ENCODE measurements at regions of chr19 and their contacts with region 1.

Region 1: GRCh38 chr19:12333162-12334159 is at the start of gene ZNF563:
- DNase-seq: peak; percentile 100
- ATAC-seq: peak; percentile 91
- H3K4me3 Mint-ChIP-seq: peak within 1 kb of the TSS; percentile 88
- H3K27ac Mint-ChIP-seq: peak within 1 kb of the TSS; percentile 97
- H3K4me1 Mint-ChIP-seq: peaks cover 34% of the 10 kb centered on the region
- H3K27me3 Mint-ChIP-seq: no peaks in the 10 kb centered on the region
- CTCF ChIP-seq: no peak
- total RNA-seq, gene ZNF563: 6.0 to 7.1 TPM

Region 2: GRCh38 chr19:12194827-12195731 is 138.4 kb before region 1 on chr19:
- CTCF ChIA-PET with region 1: no interaction called
- POLR2A ChIA-PET with region 1: interaction called, 10 read pairs
- intact Hi-C with region 1: no loop called
- DNase-seq: peak; percentile 93
- ATAC-seq: peak; percentile 97
- H3K4me3 Mint-ChIP-seq: peak overlapping the region; percentile 75
- H3K27ac Mint-ChIP-seq: peak overlapping the region; percentile 83
- H3K4me1 Mint-ChIP-seq: peaks cover 28% of the 10 kb centered on the region
- H3K27me3 Mint-ChIP-seq: no peaks in the 10 kb centered on the region
- CTCF ChIP-seq: no peak

Region 3: GRCh38 chr19:12217332-12217731 is 116.1 kb before region 1 on chr19:
- CTCF ChIA-PET with region 1: no interaction called
- POLR2A ChIA-PET with region 1: no interaction called
- intact Hi-C with region 1: no loop called
- DNase-seq: no peak
- ATAC-seq: no peak
- H3K4me3 Mint-ChIP-seq: no peak overlapping the region
- H3K27ac Mint-ChIP-seq: no peak overlapping the region
- H3K4me1 Mint-ChIP-seq: no peaks in the 10 kb centered on the region
- H3K27me3 Mint-ChIP-seq: no peaks in the 10 kb centered on the region
- CTCF ChIP-seq: no peak

Region 4: DNA sequence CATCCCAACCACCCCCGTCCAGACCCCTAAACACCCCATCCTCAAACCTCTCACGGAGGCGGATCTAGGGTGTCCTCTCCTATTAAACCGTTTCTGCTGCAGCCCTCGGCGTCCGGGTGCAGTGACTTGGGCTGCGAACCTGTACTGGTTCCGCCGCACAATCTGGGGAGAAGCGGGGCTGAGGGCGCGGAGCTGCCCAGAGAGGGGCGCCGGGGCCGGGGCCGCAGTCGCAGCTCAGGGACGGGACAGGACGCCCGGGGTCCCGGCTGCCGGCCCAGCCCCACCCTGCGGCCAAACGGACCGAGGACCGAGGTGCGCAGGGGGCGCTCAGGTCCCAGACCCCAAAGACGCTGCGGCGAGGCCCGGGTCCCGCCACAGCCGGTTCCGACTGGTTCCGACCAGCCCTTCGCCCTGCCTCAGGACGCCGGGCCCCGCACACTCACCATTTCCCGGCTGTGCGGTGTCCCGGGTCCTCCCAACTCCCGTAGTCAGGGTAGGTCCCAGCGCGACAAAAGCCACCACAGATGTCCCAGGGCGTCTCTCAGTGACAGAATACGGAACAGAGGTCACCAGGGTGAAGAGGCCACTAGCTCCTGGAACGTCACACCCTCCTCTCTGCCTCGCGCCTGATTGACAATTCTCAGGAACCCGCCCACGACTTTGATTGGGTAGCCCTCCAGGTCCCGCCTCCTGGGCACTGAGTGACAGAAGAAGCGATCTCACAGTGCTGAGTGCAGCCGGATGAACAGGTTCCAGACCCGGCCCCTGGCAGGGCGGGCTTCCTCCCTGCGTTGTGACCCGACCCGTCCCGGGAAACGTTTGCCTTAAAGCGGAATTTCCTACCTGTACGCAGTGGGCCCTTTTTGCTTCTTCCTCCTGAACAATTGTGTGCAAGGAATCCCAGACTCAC is 39.0 kb before region 1 on chr19 and contains the start of gene ZNF44:
- CTCF ChIA-PET with region 1: interaction called, 3 read pairs
- POLR2A ChIA-PET with region 1: interaction called, 25 read pairs
- intact Hi-C with region 1: loop called (anchors 5 kb)
- DNase-seq: peak; percentile 99
- ATAC-seq: peak; percentile 97
- H3K4me3 Mint-ChIP-seq: peak within 1 kb of the TSS; percentile 99
- H3K27ac Mint-ChIP-seq: peak within 1 kb of the TSS; percentile 99
- H3K4me1 Mint-ChIP-seq: peaks cover 31% of the 10 kb centered on the region
- H3K27me3 Mint-ChIP-seq: no peaks in the 10 kb centered on the region
- CTCF ChIP-seq: no peak
- total RNA-seq, gene ZNF44: 6.1 to 7.1 TPM

Region 5: GRCh38 chr19:12350890-12351197 is 17.4 kb after region 1 on chr19:
- CTCF ChIA-PET with region 1: no interaction called
- POLR2A ChIA-PET with region 1: no interaction called
- intact Hi-C with region 1: no loop called
- DNase-seq: no peak
- ATAC-seq: no peak
- H3K4me3 Mint-ChIP-seq: no peak overlapping the region
- H3K27ac Mint-ChIP-seq: no peak overlapping the region
- H3K4me1 Mint-ChIP-seq: no peaks in the 10 kb centered on the region
- H3K27me3 Mint-ChIP-seq: no peaks in the 10 kb centered on the region
- CTCF ChIP-seq: no peak

Region 6: GRCh38 chr19:12647490-12648071 is 314.1 kb after region 1 on chr19:
- CTCF ChIA-PET with region 1: no interaction called
- POLR2A ChIA-PET with region 1: no interaction called
- intact Hi-C with region 1: no loop called
- DNase-seq: peak; percentile 64
- ATAC-seq: peak; percentile 91
- H3K4me3 Mint-ChIP-seq: no peak overlapping the region
- H3K27ac Mint-ChIP-seq: no peak overlapping the region
- H3K4me1 Mint-ChIP-seq: peaks cover 5% of the 10 kb centered on the region
- H3K27me3 Mint-ChIP-seq: no peaks in the 10 kb centered on the region
- CTCF ChIP-seq: no peak